Activated CD4-positive, alpha-beta memory T cell treated with anti-CD3 and anti-CD28 coated beads, Interleukin-2, amount 10 ng/mL, durations not matched to agents 7 days and 5 days (primary cell): ENCODE measurements at regions of chr5 and their contacts with region 1.

Region 1: DNA sequence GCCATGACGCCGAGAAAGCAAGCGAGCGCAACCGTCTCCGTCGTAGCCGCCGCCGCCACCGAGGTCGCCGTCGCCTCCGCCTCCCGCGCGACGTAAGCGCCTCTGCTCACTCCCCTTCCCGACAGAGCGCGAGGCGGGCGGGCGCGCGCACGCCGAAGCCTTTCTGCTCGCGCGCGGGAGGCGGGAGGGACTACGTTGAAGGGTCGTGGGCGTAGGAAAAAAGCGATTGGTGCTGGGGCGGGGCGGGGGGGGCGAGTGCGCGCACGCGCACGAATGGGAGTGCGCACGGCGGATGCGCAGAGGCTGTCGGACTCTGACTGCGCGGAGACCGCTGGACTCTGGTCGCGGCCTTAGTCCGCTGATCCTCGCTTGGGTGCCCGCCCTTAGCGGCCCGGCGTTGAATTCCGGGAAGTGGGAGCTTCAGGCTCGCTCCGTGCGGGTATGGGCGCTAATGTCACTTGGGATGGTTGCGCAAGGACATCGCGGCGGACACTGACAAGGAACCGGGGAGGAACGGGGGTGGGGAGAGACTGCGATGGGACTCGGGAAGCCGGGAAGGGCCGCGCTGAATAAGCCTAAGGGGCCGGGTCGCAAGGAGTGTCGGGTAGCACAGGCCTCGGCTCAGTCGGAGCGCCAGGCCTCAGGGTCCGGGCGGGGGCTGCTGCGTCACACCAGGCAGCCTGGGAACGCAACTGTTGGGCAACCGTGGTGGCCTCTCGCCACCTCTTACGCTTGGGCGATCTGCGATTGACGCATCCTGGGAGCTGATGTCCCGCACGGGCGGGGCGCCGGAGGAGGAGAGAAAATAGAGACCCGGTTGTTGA is at the start of gene CHD1:
- DNase-seq: peak; percentile 95
- H3K4me3 Mint-ChIP-seq: peak within 1 kb of the TSS; percentile 100
- H3K27ac Mint-ChIP-seq: peak within 1 kb of the TSS; percentile 98
- H3K4me1 Mint-ChIP-seq: peaks cover 65% of the 10 kb centered on the region
- H3K27me3 Mint-ChIP-seq: no peaks in the 10 kb centered on the region
- total RNA-seq, gene CHD1: 45.4 to 47.5 TPM

Region 2: GRCh38 chr5:98905857-98906690 is 23.0 kb before region 1 on chr5:
- CTCF ChIA-PET with region 1: interaction called, 13 read pairs
- POLR2A ChIA-PET with region 1: interaction called, 77 read pairs
- DNase-seq: no peak
- H3K4me3 Mint-ChIP-seq: no peak overlapping the region
- H3K27ac Mint-ChIP-seq: no peak overlapping the region
- H3K4me1 Mint-ChIP-seq: peaks cover 43% of the 10 kb centered on the region
- H3K27me3 Mint-ChIP-seq: no peaks in the 10 kb centered on the region

Region 3: GRCh38 chr5:98917433-98917832 is 11.7 kb before region 1 on chr5:
- CTCF ChIA-PET with region 1: interaction called, 4 read pairs
- POLR2A ChIA-PET with region 1: interaction called, 77 read pairs
- DNase-seq: no peak
- H3K4me3 Mint-ChIP-seq: no peak overlapping the region
- H3K27ac Mint-ChIP-seq: no peak overlapping the region
- H3K4me1 Mint-ChIP-seq: peaks cover 47% of the 10 kb centered on the region
- H3K27me3 Mint-ChIP-seq: no peaks in the 10 kb centered on the region

Region 4: GRCh38 chr5:99032234-99033013 is 103.3 kb after region 1 on chr5:
- CTCF ChIA-PET with region 1: interaction called, 4 read pairs
- POLR2A ChIA-PET with region 1: interaction called, 82 read pairs
- DNase-seq: peak; percentile 28
- H3K4me3 Mint-ChIP-seq: peak overlapping the region; percentile 76
- H3K27ac Mint-ChIP-seq: peak overlapping the region; percentile 93
- H3K4me1 Mint-ChIP-seq: peaks cover 66% of the 10 kb centered on the region
- H3K27me3 Mint-ChIP-seq: no peaks in the 10 kb centered on the region

Region 5: GRCh38 chr5:99060306-99061261 is 131.5 kb after region 1 on chr5:
- CTCF ChIA-PET with region 1: interaction called, 4 read pairs
- POLR2A ChIA-PET with region 1: interaction called, 23 read pairs
- DNase-seq: peak; percentile 86
- H3K4me3 Mint-ChIP-seq: no peak overlapping the region
- H3K27ac Mint-ChIP-seq: no peak overlapping the region
- H3K4me1 Mint-ChIP-seq: peaks cover 2% of the 10 kb centered on the region
- H3K27me3 Mint-ChIP-seq: peaks cover 6% of the 10 kb centered on the region

Region 6: DNA sequence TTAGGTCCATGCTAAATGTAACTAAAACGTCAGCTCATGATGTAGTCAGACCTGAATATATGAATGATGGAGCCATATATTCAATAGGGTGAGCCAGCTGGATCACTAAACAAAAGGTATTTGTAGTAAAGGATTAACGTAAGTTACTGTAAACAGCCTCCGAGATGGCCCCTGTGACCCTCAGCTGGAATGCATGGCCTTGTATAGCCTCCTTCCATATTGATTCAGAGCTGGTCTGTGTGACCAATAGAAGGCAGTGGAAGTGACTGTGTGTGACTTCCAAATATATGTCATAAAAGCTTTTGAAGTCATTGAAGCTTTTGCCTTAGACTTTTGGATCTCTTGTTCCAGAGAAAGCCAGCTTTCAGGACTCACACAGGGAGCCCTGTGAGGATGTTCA is 154.1 kb after region 1 on chr5:
- CTCF ChIA-PET with region 1: no interaction called
- POLR2A ChIA-PET with region 1: no interaction called
- DNase-seq: no peak
- H3K4me3 Mint-ChIP-seq: no peak overlapping the region
- H3K27ac Mint-ChIP-seq: no peak overlapping the region
- H3K4me1 Mint-ChIP-seq: no peaks in the 10 kb centered on the region
- H3K27me3 Mint-ChIP-seq: peaks cover 6% of the 10 kb centered on the region